Caco-2 (cell line): ENCODE measurements at regions of chr9 and their contacts with region 1.

Region 1: GRCh38 chr9:123401879-123402513 is 46.0 kb downstream of the CRB2 start:
- DNase-seq: peak in 1 of 2 experiments; percentile 60
- H3K4me3 ChIP-seq: no peak overlapping the region
- H3K4me3 Mint-ChIP-seq: no peak overlapping the region
- H3K27ac Mint-ChIP-seq: no peak overlapping the region
- H3K4me1 ChIP-seq: no peaks in the 10 kb centered on the region
- H3K4me1 Mint-ChIP-seq: no peaks in the 10 kb centered on the region
- H3K27me3 ChIP-seq: no peaks in the 10 kb centered on the region
- H3K27me3 Mint-ChIP-seq: no peaks in the 10 kb centered on the region
- CTCF ChIP-seq: peak; percentile 78 to 81

Region 2: GRCh38 chr9:123453831-123454321 is 51.9 kb after region 1 on chr9:
- CTCF ChIA-PET with region 1: no interaction called
- POLR2A ChIA-PET with region 1: no interaction called
- intact Hi-C with region 1: no loop called
- DNase-seq: no peak
- H3K4me3 ChIP-seq: no peak overlapping the region
- H3K4me3 Mint-ChIP-seq: no peak overlapping the region
- H3K27ac Mint-ChIP-seq: no peak overlapping the region
- H3K4me1 ChIP-seq: no peaks in the 10 kb centered on the region
- H3K4me1 Mint-ChIP-seq: no peaks in the 10 kb centered on the region
- H3K27me3 ChIP-seq: no peaks in the 10 kb centered on the region
- H3K27me3 Mint-ChIP-seq: no peaks in the 10 kb centered on the region
- CTCF ChIP-seq: no peak

Region 3: GRCh38 chr9:123482295-123482968 is 80.4 kb after region 1 on chr9:
- CTCF ChIA-PET with region 1: no interaction called
- POLR2A ChIA-PET with region 1: no interaction called
- intact Hi-C with region 1: loop called (anchors 5 kb)
- DNase-seq: no peak
- H3K4me3 ChIP-seq: no peak overlapping the region
- H3K4me3 Mint-ChIP-seq: no peak overlapping the region
- H3K27ac Mint-ChIP-seq: peak overlapping the region; percentile 63
- H3K4me1 ChIP-seq: peaks cover 52% of the 10 kb centered on the region
- H3K4me1 Mint-ChIP-seq: peaks cover 27% of the 10 kb centered on the region
- H3K27me3 ChIP-seq: no peaks in the 10 kb centered on the region
- H3K27me3 Mint-ChIP-seq: no peaks in the 10 kb centered on the region
- CTCF ChIP-seq: no peak

Region 4: DNA sequence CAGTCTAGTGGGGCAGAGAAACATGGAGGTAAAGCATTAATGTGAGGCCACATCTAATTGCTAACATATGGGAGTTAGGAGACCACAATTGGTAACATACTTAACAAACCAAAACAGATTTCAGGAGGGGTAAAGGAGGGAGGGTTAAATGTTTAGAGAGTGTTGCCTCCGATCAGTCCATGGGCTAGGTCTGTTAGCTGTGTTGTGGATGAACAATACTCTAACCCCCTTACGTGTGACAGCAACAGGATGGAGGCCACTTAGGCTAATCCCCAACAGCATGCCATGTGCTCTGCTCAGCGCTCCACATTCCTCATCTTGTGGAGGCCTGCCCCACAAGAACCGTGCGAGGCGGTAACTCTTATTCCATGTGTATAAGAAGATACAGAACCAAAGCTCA is 121.0 kb after region 1 on chr9:
- CTCF ChIA-PET with region 1: no interaction called
- POLR2A ChIA-PET with region 1: no interaction called
- intact Hi-C with region 1: loop called (anchors 5 kb)
- DNase-seq: no peak
- H3K4me3 ChIP-seq: no peak overlapping the region
- H3K4me3 Mint-ChIP-seq: no peak overlapping the region
- H3K27ac Mint-ChIP-seq: no peak overlapping the region
- H3K4me1 ChIP-seq: no peaks in the 10 kb centered on the region
- H3K4me1 Mint-ChIP-seq: no peaks in the 10 kb centered on the region
- H3K27me3 ChIP-seq: no peaks in the 10 kb centered on the region
- H3K27me3 Mint-ChIP-seq: no peaks in the 10 kb centered on the region
- CTCF ChIP-seq: no peak

Region 5: GRCh38 chr9:123544007-123544827 is 142.2 kb after region 1 on chr9:
- CTCF ChIA-PET with region 1: interaction called, 4 read pairs
- POLR2A ChIA-PET with region 1: no interaction called
- intact Hi-C with region 1: loop called (anchors 1 kb)
- DNase-seq: peak in 1 of 2 experiments; percentile 37
- H3K4me3 ChIP-seq: no peak overlapping the region
- H3K4me3 Mint-ChIP-seq: no peak overlapping the region
- H3K27ac Mint-ChIP-seq: no peak overlapping the region
- H3K4me1 ChIP-seq: peaks cover 9% of the 10 kb centered on the region; the same call in 1 of the 2 replicates
- H3K4me1 Mint-ChIP-seq: peaks cover 7% of the 10 kb centered on the region
- H3K27me3 ChIP-seq: no peaks in the 10 kb centered on the region
- H3K27me3 Mint-ChIP-seq: no peaks in the 10 kb centered on the region
- CTCF ChIP-seq: peak; percentile 75 to 79

Region 6: DNA sequence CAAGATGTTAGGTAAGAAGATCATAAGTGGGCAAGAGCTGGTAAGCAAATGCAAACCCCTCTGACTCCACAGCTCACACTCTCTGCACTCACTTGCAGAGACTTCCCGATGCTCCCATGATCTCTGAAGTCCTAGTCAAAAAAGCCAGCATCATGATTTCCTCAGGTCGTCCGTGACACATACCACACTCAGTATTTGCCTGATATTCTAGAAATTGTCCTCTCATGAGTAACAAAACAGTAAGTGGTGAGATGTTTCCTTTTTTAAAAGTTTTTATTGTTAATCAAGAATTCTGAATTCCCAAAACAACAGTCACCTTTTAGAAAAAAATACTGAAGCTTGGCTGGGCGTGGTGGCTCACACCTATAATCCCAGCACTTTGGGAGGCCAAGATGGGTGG is 333.4 kb after region 1 on chr9:
- CTCF ChIA-PET with region 1: no interaction called
- POLR2A ChIA-PET with region 1: interaction called, 11 read pairs
- intact Hi-C with region 1: no loop called
- DNase-seq: no peak
- H3K4me3 ChIP-seq: no peak overlapping the region
- H3K4me3 Mint-ChIP-seq: no peak overlapping the region
- H3K27ac Mint-ChIP-seq: no peak overlapping the region
- H3K4me1 ChIP-seq: no peaks in the 10 kb centered on the region
- H3K4me1 Mint-ChIP-seq: peaks cover 8% of the 10 kb centered on the region
- H3K27me3 ChIP-seq: no peaks in the 10 kb centered on the region
- H3K27me3 Mint-ChIP-seq: no peaks in the 10 kb centered on the region
- CTCF ChIP-seq: no peak